Naive thymus-derived CD4-positive, alpha-beta T cell (primary cell): ENCODE measurements at regions of chr15 and their contacts with region 1.

Region 1: GRCh38 chr15:95839367-95839782 is 491.1 kb upstream of the NR2F2 start:
- DNase-seq: peak in 6 of 9 donors; percentile 8 to 53 (median 39)
- ATAC-seq: peak; percentile 71
- H3K4me3 ChIP-seq: no peak overlapping the region
- H3K4me3 Mint-ChIP-seq: peak overlapping the region in 9 of 10 donors; percentile 0 to 81 (median 55)
- H3K27ac ChIP-seq: peak overlapping the region; percentile 24
- H3K27ac Mint-ChIP-seq: peak overlapping the region; percentile 40 to 95 (median 79)
- H3K4me1 ChIP-seq: peaks cover 21 to 22% of the 10 kb centered on the region in 2 donors
- H3K4me1 Mint-ChIP-seq: peaks cover 12 to 49% (median 43%) of the 10 kb centered on the region in 7 donors
- H3K27me3 ChIP-seq: no peaks in the 10 kb centered on the region
- H3K27me3 Mint-ChIP-seq: peaks cover 0 to 7% (median 0%) of the 10 kb centered on the region in 5 donors

Region 2: GRCh38 chr15:95734422-95735316 is 104.7 kb before region 1 on chr15:
- CTCF ChIA-PET with region 1: no interaction called
- POLR2A ChIA-PET with region 1: no interaction called
- intact Hi-C with region 1: loop called in 1 of 2 experiments (anchors 10 kb)
- DNase-seq: peak in 2 of 9 donors; percentile 11 to 14
- ATAC-seq: no peak
- H3K4me3 ChIP-seq: peak overlapping the region; percentile 15
- H3K4me3 Mint-ChIP-seq: peak overlapping the region; percentile 17 to 77 (median 69)
- H3K27ac ChIP-seq: peak overlapping the region; percentile 32
- H3K27ac Mint-ChIP-seq: peak overlapping the region; percentile 21 to 92 (median 83)
- H3K4me1 ChIP-seq: peaks cover 13 to 26% of the 10 kb centered on the region in 2 donors
- H3K4me1 Mint-ChIP-seq: peaks cover 19 to 44% (median 35%) of the 10 kb centered on the region in 7 donors
- H3K27me3 ChIP-seq: no peaks in the 10 kb centered on the region
- H3K27me3 Mint-ChIP-seq: peaks cover 0 to 6% (median 0%) of the 10 kb centered on the region in 5 donors

Region 3: GRCh38 chr15:95864467-95864886 is 25.1 kb after region 1 on chr15:
- CTCF ChIA-PET with region 1: no interaction called
- POLR2A ChIA-PET with region 1: no interaction called
- intact Hi-C with region 1: loop called in 1 of 2 experiments (anchors 1 kb)
- DNase-seq: no peak
- ATAC-seq: peak; percentile 60
- H3K4me3 ChIP-seq: no peak overlapping the region
- H3K4me3 Mint-ChIP-seq: peak overlapping the region in 1 of 10 donors; percentile 45
- H3K27ac ChIP-seq: no peak overlapping the region
- H3K27ac Mint-ChIP-seq: peak overlapping the region in 1 of 9 donors; percentile 82
- H3K4me1 ChIP-seq: peaks cover 0 to 7% of the 10 kb centered on the region in 2 donors
- H3K4me1 Mint-ChIP-seq: peaks cover under 1 to 43% (median 8%) of the 10 kb centered on the region in 7 donors
- H3K27me3 ChIP-seq: no peaks in the 10 kb centered on the region
- H3K27me3 Mint-ChIP-seq: peaks cover 0 to 67% (median 17%) of the 10 kb centered on the region in 5 donors